Heart right ventricle (tissue), 16 donors: ENCODE measurements at regions of chr16 and their contacts with region 1.

Region 1: GRCh38 chr16:8963825-8964441 is at the start of gene USP7:
- DNase-seq: peak; percentile 94 to 95
- ATAC-seq: peak; percentile 92 to 97 (median 96)
- H3K4me3 ChIP-seq: peak within 1 kb of the TSS; percentile 69 to 96 (median 81)
- H3K27ac ChIP-seq: peak within 1 kb of the TSS; percentile 68 to 94 (median 85)
- H3K4me1 ChIP-seq: peaks cover 14 to 50% (median 39%) of the 10 kb centered on the region in 9 donors
- H3K27me3 ChIP-seq: no peaks in the 10 kb centered on the region
- CTCF ChIP-seq: peak in 1 of 9 donors; percentile 14
- total RNA-seq, gene USP7: 59.0 to 84.8 (median 67.1) TPM

Region 2: DNA sequence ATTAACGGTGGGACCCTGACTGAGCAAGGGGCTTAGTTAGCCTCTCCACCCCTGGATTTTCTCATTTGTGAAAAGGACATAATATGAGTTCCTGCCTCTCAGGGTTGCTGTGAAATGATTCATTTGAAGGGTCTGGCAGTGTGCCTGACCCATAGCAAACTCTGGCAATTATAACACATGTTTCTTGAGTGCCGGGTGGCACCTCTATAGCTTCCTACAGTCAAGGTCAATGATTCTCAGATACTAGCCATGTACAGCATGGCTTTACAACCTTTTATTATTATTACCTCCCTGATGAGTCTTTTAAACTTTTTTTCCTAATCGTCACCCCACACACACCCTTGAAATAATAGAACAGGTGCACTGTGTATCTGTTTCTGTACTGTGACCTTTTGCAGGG is 415.8 kb before region 1 on chr16:
- intact Hi-C with region 1: no loop called
- DNase-seq: no peak
- ATAC-seq: no peak
- H3K4me3 ChIP-seq: no peak overlapping the region
- H3K27ac ChIP-seq: no peak overlapping the region
- H3K4me1 ChIP-seq: no peaks in the 10 kb centered on the region
- H3K27me3 ChIP-seq: peaks cover 0 to 55% (median 41%) of the 10 kb centered on the region in 7 donors
- CTCF ChIP-seq: no peak

Region 3: GRCh38 chr16:8905168-8905762 is 58.7 kb before region 1 on chr16:
- intact Hi-C with region 1: loop called in 2 of 10 experiments (anchors 5 kb)
- DNase-seq: no peak
- ATAC-seq: peak in 1 of 8 donors; percentile 38
- H3K4me3 ChIP-seq: no peak overlapping the region
- H3K27ac ChIP-seq: no peak overlapping the region
- H3K4me1 ChIP-seq: peaks cover 0 to 7% (median 0%) of the 10 kb centered on the region in 9 donors
- H3K27me3 ChIP-seq: no peaks in the 10 kb centered on the region
- CTCF ChIP-seq: peak in 6 of 9 donors; percentile 14 to 37 (median 28)

Region 4: GRCh38 chr16:8912793-8913192 is 51.1 kb before region 1 on chr16:
- intact Hi-C with region 1: loop called in 2 of 10 experiments (anchors 5 kb)
- DNase-seq: no peak
- ATAC-seq: no peak
- H3K4me3 ChIP-seq: no peak overlapping the region
- H3K27ac ChIP-seq: no peak overlapping the region
- H3K4me1 ChIP-seq: peaks cover 0 to 7% (median 0%) of the 10 kb centered on the region in 9 donors
- H3K27me3 ChIP-seq: no peaks in the 10 kb centered on the region
- CTCF ChIP-seq: no peak

Region 5: GRCh38 chr16:8928467-8928957 is 35.4 kb before region 1 on chr16:
- intact Hi-C with region 1: loop called in 1 of 10 experiments (anchors 5 kb)
- DNase-seq: no peak
- ATAC-seq: peak in 6 of 8 donors; percentile 31 to 80 (median 50)
- H3K4me3 ChIP-seq: no peak overlapping the region
- H3K27ac ChIP-seq: no peak overlapping the region
- H3K4me1 ChIP-seq: peaks cover 8 to 57% (median 43%) of the 10 kb centered on the region in 9 donors
- H3K27me3 ChIP-seq: no peaks in the 10 kb centered on the region
- CTCF ChIP-seq: no peak

Region 6: DNA sequence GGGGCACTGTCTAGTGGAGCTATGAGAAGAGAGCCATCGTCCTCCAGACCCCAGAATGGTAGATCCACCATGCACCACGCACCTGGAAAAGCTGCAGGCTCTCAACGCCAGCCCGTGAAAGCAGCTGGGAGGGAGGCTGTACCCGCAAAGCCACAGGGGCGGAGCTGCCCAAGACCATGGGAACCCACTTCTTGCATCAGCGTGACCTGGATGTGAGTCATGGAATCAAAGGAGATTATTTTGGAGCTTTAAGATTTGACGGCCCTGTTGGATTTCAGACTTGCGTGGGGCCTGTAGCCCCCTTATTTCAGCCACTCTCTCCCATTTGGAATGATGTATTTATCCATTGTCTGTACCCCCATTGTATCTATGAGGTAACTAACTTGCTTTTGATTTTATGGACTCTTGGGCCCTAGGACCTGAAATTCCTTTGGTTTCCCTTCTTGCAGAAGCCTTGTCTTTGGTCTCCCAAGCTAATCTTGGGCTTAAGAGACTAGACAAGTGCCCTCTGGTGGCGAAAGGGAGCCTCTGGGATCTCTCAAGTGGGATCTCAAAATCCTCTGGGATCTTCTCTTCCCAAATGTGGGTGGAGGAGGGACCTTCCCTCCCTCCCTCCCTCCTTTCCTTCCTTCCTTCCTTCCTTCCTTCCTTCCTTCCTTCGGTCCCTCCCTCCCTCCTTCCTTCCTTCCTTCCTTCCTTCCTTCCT is 69.3 kb after region 1 on chr16:
- intact Hi-C with region 1: no loop called
- DNase-seq: no peak
- ATAC-seq: no peak
- H3K4me3 ChIP-seq: no peak overlapping the region
- H3K27ac ChIP-seq: no peak overlapping the region
- H3K4me1 ChIP-seq: no peaks in the 10 kb centered on the region
- H3K27me3 ChIP-seq: no peaks in the 10 kb centered on the region
- CTCF ChIP-seq: peak; percentile 9 to 53 (median 40)

Region 7: GRCh38 chr16:9090960-9091866 is 127.3 kb after region 1 on chr16 and contains the start of gene HAPSTR1:
- intact Hi-C with region 1: loop called in 5 of 10 experiments (anchors 5 to 10 kb)
- DNase-seq: peak; percentile 100
- ATAC-seq: peak; percentile 93 to 97 (median 96)
- H3K4me3 ChIP-seq: peak within 1 kb of the TSS; percentile 80 to 98 (median 94)
- H3K27ac ChIP-seq: peak within 1 kb of the TSS; percentile 96 to 100 (median 99)
- H3K4me1 ChIP-seq: peaks cover 14 to 47% (median 40%) of the 10 kb centered on the region in 9 donors
- H3K27me3 ChIP-seq: no peaks in the 10 kb centered on the region
- CTCF ChIP-seq: no peak
- total RNA-seq, gene HAPSTR1: 57.2 to 74.7 (median 64.1) TPM

Region 8: DNA sequence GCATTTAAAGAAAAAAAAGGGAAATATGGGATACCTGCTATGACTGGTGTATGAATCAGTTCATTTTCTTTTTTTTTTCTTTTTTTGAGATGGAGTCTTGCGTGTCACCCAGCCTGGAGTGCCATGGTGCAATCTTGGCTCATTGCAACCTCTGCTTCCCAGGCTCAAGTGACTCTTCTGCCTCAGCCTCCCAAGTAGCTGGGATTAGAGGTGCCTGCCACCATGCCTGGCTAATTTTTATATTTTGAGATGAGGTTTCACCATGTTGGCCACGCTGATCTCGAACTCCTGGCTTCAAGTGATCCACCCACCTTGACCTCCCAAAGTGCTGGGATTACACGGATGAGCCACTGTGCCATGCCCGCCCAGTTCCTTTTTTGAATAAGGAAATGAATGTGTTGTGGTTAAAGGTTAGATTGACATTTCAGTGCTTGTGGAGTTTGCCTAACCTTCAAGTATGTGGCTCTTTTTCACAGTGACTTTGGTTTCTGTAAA is 135.2 kb after region 1 on chr16:
- intact Hi-C with region 1: loop called in 5 of 10 experiments (anchors 5 to 10 kb)
- DNase-seq: no peak
- ATAC-seq: peak in 1 of 8 donors; percentile 34
- H3K4me3 ChIP-seq: peak overlapping the region in 1 of 10 donors; percentile 2
- H3K27ac ChIP-seq: peak overlapping the region in 5 of 10 donors; percentile 0 to 55 (median 34)
- H3K4me1 ChIP-seq: peaks cover 28 to 100% (median 100%) of the 10 kb centered on the region in 9 donors
- H3K27me3 ChIP-seq: no peaks in the 10 kb centered on the region
- CTCF ChIP-seq: no peak